T-cell (primary cell): ENCODE measurements at regions of chr12 and their contacts with region 1.

Region 1: GRCh38 chr12:122123051-122123760 is 44.6 kb downstream of the MLXIP start:
- DNase-seq: peak; percentile 26 to 85 (median 63)
- ATAC-seq: peak; percentile 48 to 72 (median 64)
- H3K4me3 ChIP-seq: no peak overlapping the region
- H3K4me3 Mint-ChIP-seq: peak overlapping the region; percentile 25 to 61 (median 51)
- H3K27ac ChIP-seq: no peak overlapping the region
- H3K27ac Mint-ChIP-seq: peak overlapping the region; percentile 74 to 83
- H3K4me1 ChIP-seq: peaks cover 5 to 45% of the 10 kb centered on the region in 2 experiments
- H3K4me1 Mint-ChIP-seq: peaks cover 43 to 45% (median 45%) of the 10 kb centered on the region in 3 donors
- H3K27me3 ChIP-seq: no peaks in the 10 kb centered on the region
- H3K27me3 Mint-ChIP-seq: no peaks in the 10 kb centered on the region

Region 2: DNA sequence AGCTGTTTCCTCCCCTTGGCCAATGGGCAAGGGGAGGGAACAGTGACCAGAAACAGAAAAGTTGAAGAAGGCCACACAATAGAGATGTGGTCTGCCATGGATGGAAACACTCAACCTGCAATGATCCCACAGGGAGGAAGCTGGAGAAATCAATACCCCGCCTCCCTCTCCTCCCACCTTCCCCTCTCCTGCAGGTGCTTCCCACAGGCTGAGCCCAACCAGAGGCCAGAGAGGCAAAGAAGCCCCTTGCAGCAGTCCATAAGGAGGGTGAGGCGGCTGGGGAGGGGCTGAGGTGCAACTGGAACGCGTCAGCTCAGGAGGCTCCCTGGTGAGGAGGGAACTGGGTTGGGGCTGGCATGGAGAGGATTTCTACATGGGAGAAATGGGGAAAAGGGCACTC is 639.3 kb before region 1 on chr12:
- CTCF ChIA-PET with region 1: no interaction called
- POLR2A ChIA-PET with region 1: interaction called in 1 of 2 experiments, 12 read pairs
- DNase-seq: no peak
- ATAC-seq: no peak
- H3K4me3 ChIP-seq: no peak overlapping the region
- H3K4me3 Mint-ChIP-seq: no peak overlapping the region
- H3K27ac ChIP-seq: no peak overlapping the region
- H3K27ac Mint-ChIP-seq: no peak overlapping the region
- H3K4me1 ChIP-seq: no peaks in the 10 kb centered on the region
- H3K4me1 Mint-ChIP-seq: peaks cover 0 to 5% (median 4%) of the 10 kb centered on the region in 3 donors
- H3K27me3 ChIP-seq: no peaks in the 10 kb centered on the region
- H3K27me3 Mint-ChIP-seq: no peaks in the 10 kb centered on the region

Region 3: GRCh38 chr12:122051231-122051876 is 71.9 kb before region 1 on chr12:
- CTCF ChIA-PET with region 1: interaction called, 19 to 23 read pairs
- POLR2A ChIA-PET with region 1: no interaction called
- DNase-seq: no peak
- ATAC-seq: no peak
- H3K4me3 ChIP-seq: no peak overlapping the region
- H3K4me3 Mint-ChIP-seq: no peak overlapping the region
- H3K27ac ChIP-seq: no peak overlapping the region
- H3K27ac Mint-ChIP-seq: no peak overlapping the region
- H3K4me1 ChIP-seq: peaks cover 0 to 7% of the 10 kb centered on the region in 2 experiments
- H3K4me1 Mint-ChIP-seq: peaks cover 0 to 7% (median 6%) of the 10 kb centered on the region in 3 donors
- H3K27me3 ChIP-seq: no peaks in the 10 kb centered on the region
- H3K27me3 Mint-ChIP-seq: no peaks in the 10 kb centered on the region